ENCODE measurements at regions of chr3 and their contacts with region 1.

Region 1: DNA sequence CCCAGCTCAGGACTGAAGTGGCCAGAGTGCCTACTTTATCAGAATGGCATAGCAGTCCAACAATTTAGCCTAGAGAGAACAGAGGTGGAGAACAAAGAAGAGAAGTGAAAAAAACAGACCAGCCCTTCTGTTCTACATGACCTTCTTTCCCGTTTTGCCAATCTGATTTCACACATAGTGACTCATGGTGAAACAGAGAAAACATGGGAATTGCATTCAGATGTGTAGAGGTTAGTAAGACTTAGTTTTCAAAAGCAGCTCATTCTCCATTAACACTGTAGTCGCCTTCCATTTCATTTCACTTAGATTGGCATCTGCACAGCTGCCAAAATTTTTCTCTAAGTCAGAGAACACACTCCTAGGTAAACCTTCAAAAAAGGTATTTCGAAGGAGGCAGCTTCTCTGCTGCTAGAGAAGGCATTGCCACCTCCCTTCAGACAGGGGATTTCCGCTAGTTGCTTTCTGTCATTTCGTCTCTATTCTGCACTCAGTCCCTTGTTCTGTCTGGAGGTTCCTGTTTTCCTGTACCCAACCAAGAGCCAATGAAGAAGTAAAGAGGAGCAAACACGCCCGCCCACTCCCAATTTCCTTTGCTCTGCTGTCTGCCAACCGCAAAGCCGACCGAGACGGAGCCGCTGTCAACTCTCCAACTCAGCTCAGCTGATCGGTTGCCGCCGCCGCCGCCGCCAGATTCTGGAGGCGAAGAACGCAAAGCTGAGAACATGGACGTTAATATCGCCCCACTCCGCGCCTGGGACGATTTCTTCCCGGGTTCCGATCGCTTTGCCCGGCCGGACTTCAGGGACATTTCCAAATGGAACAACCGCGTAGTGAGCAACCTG is at the start of gene ARL6IP5:
- DNase-seq: peak; percentile 93 to 99 (median 97)

Region 2: GRCh38 chr3:68523330-68523729 is 561.2 kb before region 1 on chr3:
- intact Hi-C with region 1: no loop called
- DNase-seq: no peak

Region 3: GRCh38 chr3:69116897-69117296 is 32.4 kb after region 1 on chr3:
- intact Hi-C with region 1: loop called (anchors 2 kb)
- DNase-seq: peak in 41 of 42 donors; percentile 32 to 92 (median 76)

Measured in head of caudate nucleus (tissue), 42 donors.